CD8-positive, alpha-beta T cell (primary cell): ENCODE measurements at regions of chr9 and their contacts with region 1.

Region 1: DNA sequence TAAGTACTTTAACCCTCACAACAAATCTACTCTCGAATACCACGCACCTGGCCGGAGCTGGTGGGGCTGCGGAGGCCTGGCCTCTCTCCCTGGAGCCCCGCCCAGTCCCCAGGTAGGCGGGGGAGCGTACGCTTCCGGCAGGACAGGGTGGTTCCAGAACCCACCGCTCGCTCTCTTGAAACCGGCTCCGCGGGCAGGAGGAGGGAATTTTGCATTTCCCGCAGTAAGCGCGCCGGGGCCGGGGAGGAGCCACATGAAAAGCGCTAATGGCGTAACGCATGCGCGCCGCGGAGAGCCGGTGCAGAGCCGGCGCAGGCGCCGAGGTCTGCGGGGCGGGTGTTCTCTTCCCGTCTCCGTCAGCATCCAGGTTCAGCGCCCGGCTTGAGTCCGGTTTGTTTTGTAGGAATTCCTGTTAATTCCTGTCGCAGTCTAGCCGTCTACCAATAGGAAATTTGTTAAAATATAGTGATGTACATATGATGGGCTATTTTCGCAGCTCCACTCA is 20.8 kb downstream of the CAVIN4 start:
- DNase-seq: peak; percentile 60 to 90 (median 79)
- ATAC-seq: peak; percentile 86
- H3K4me3 ChIP-seq: peak overlapping the region; percentile 54 to 59
- H3K4me3 Mint-ChIP-seq: peak overlapping the region; percentile 80
- H3K27ac ChIP-seq: peak overlapping the region in 1 of 2 experiments; percentile 49
- H3K27ac Mint-ChIP-seq: peak overlapping the region; percentile 73
- H3K4me1 ChIP-seq: peaks cover 7% of the 10 kb centered on the region
- H3K4me1 Mint-ChIP-seq: peaks cover 24% of the 10 kb centered on the region
- H3K27me3 ChIP-seq: no peaks in the 10 kb centered on the region
- H3K27me3 Mint-ChIP-seq: no peaks in the 10 kb centered on the region
- CTCF ChIP-seq: no peak

Region 2: DNA sequence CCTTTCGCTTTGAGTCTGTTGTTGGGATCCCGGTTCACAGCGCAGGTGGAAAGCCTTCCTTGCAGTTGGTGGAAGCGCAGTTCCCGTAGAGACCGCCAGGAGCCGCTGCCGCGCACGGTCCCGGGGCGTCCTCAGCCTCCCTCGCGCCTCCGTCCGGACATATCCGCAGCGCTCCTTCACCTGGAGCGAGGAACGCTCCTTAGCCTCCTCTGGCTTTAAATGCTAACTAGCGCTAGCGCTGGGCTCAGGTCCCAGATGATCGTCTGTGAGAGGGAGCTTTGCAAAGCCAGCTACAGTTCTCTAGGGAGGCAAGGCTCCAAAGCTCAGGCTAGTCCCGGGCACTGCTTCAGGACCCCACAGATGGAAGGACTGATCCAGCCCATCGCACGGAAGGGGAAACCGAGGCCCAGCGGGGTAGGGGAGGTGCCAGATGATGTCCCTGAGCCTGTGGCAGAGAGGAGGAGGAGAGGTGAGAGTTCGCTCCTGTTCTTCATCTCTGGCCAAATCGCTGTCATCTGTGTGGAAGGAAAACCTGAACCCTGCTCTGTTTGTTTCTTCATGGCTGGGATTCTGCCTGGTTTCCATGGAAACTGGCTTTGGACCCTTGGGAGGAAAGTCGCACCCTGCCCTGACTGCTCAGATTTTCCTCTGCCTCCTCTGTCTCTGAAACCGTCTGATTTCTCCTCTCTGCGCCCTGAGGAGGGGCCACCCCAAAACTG is 1623.5 kb before region 1 on chr9:
- CTCF ChIA-PET with region 1: no interaction called
- POLR2A ChIA-PET with region 1: no interaction called
- intact Hi-C with region 1: loop called in 1 of 2 experiments (anchors 5 kb)
- DNase-seq: peak; percentile 66 to 88 (median 81)
- ATAC-seq: peak; percentile 99
- H3K4me3 ChIP-seq: peak overlapping the region; percentile 33
- H3K4me3 Mint-ChIP-seq: peak overlapping the region; percentile 67
- H3K27ac ChIP-seq: no peak overlapping the region
- H3K27ac Mint-ChIP-seq: no peak overlapping the region
- H3K4me1 ChIP-seq: peaks cover 18% of the 10 kb centered on the region
- H3K4me1 Mint-ChIP-seq: peaks cover 6% of the 10 kb centered on the region
- H3K27me3 ChIP-seq: peaks cover 0 to 7% of the 10 kb centered on the region in 2 experiments
- H3K27me3 Mint-ChIP-seq: peaks cover 7% of the 10 kb centered on the region
- CTCF ChIP-seq: peak; percentile 97

Region 3: DNA sequence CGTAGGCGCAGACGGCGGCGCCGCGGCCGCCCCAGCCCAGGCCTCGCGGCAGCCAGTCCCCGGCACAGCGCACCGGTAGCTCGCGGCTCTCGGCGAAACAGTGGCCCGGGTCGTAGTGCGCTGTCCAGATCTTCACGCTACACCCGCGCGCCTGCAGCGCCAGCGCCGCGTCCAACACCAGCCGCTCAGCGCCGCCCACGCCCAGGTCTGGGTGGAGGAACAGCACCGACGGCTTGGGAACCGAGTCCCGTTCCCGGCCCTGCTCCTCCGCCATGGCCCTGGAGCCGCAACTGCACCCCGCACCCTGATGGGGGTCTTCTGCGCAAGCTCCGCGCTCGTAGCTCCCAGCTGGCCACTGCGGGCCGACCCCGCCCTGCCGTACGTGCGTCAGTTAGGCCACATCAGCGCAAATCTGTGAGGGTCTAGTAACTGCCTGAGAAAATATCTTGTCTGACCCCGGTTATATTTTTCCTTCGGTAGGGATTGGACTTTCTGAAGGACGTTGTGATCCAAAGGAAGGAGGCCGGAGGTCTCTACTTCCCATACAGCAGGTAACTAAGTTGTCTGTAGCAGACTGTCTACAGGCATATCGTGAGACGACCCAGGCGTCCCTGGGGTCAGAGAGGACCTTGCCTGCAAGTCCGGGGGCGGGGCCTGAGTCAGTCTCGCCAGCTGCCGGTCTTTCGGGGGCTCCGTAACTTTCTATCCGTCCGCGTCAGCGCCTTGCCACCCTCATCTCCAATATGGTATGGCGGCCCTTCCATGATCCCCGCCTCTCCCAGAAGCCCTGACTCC is 1376.9 kb before region 1 on chr9 and contains the starts of genes ALG2 and SEC61B:
- CTCF ChIA-PET with region 1: no interaction called
- POLR2A ChIA-PET with region 1: no interaction called
- intact Hi-C with region 1: loop called in 1 of 2 experiments (anchors 5 kb)
- DNase-seq: peak; percentile 87 to 96 (median 94)
- ATAC-seq: peak; percentile 88
- H3K4me3 ChIP-seq: peak within 1 kb of the TSS; percentile 79 to 90
- H3K4me3 Mint-ChIP-seq: peak within 1 kb of the TSS; percentile 99
- H3K27ac ChIP-seq: peak within 1 kb of the TSS; percentile 95 to 99
- H3K27ac Mint-ChIP-seq: peak within 1 kb of the TSS; percentile 100
- H3K4me1 ChIP-seq: peaks cover 30% of the 10 kb centered on the region
- H3K4me1 Mint-ChIP-seq: peaks cover 80% of the 10 kb centered on the region
- H3K27me3 ChIP-seq: no peaks in the 10 kb centered on the region
- H3K27me3 Mint-ChIP-seq: no peaks in the 10 kb centered on the region
- CTCF ChIP-seq: no peak
- total RNA-seq, gene ALG2: 21.0 to 24.7 TPM
- total RNA-seq, gene SEC61B: 107 to 108 TPM

Region 4: GRCh38 chr9:100028201-100028784 is 570.4 kb before region 1 on chr9:
- CTCF ChIA-PET with region 1: no interaction called
- POLR2A ChIA-PET with region 1: no interaction called
- intact Hi-C with region 1: loop called in 1 of 2 experiments (anchors 1 kb)
- DNase-seq: peak; percentile 47 to 75 (median 66)
- ATAC-seq: peak; percentile 97
- H3K4me3 ChIP-seq: no peak overlapping the region
- H3K4me3 Mint-ChIP-seq: no peak overlapping the region
- H3K27ac ChIP-seq: no peak overlapping the region
- H3K27ac Mint-ChIP-seq: no peak overlapping the region
- H3K4me1 ChIP-seq: no peaks in the 10 kb centered on the region
- H3K4me1 Mint-ChIP-seq: peaks cover 3% of the 10 kb centered on the region
- H3K27me3 ChIP-seq: no peaks in the 10 kb centered on the region
- H3K27me3 Mint-ChIP-seq: no peaks in the 10 kb centered on the region
- CTCF ChIP-seq: peak; percentile 73

Region 5: DNA sequence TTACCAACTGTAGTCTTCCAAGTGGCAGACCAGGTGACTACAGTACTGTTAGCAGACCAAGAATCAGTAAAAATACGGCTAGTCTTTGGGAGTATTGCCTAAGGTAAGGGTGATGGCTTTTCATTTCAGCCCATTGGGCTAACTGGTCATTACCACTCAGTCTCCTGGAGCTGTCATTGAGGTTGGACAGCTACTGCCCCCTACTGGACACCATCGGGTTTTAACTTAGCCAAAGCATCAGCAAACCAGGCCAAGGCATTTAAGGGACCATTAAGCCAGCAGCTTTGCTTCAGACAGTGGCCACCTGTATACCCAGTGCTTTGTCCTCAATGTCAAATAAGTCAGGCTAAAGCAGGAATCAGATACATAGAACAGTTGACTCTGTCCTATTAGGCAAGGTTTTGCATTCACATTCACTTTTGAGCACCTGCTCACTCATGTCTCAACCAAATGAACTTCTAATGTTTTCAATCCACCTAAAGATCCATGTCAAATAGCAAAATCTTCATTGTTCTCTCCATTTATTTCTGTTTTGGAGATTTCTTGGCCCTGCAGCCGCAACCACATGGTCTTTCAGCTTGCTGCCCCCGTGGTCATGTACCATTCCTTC is 382.4 kb before region 1 on chr9:
- CTCF ChIA-PET with region 1: no interaction called
- POLR2A ChIA-PET with region 1: no interaction called
- intact Hi-C with region 1: loop called in 1 of 2 experiments (anchors 10 kb)
- DNase-seq: peak; percentile 27 to 75 (median 56)
- ATAC-seq: peak; percentile 51
- H3K4me3 ChIP-seq: no peak overlapping the region
- H3K4me3 Mint-ChIP-seq: no peak overlapping the region
- H3K27ac ChIP-seq: no peak overlapping the region
- H3K27ac Mint-ChIP-seq: no peak overlapping the region
- H3K4me1 ChIP-seq: no peaks in the 10 kb centered on the region
- H3K4me1 Mint-ChIP-seq: no peaks in the 10 kb centered on the region
- H3K27me3 ChIP-seq: no peaks in the 10 kb centered on the region
- H3K27me3 Mint-ChIP-seq: no peaks in the 10 kb centered on the region
- CTCF ChIP-seq: peak; percentile 66

Region 6: GRCh38 chr9:100411472-100412283 is 187.0 kb before region 1 on chr9:
- CTCF ChIA-PET with region 1: no interaction called
- POLR2A ChIA-PET with region 1: no interaction called
- intact Hi-C with region 1: loop called in 1 of 2 experiments (anchors 5 kb)
- DNase-seq: peak; percentile 60 to 94 (median 87)
- ATAC-seq: peak; percentile 100
- H3K4me3 ChIP-seq: peak overlapping the region; percentile 42 to 57
- H3K4me3 Mint-ChIP-seq: peak overlapping the region; percentile 94
- H3K27ac ChIP-seq: peak overlapping the region in 1 of 2 experiments; percentile 25
- H3K27ac Mint-ChIP-seq: peak overlapping the region; percentile 83
- H3K4me1 ChIP-seq: peaks cover 9% of the 10 kb centered on the region
- H3K4me1 Mint-ChIP-seq: peaks cover 13% of the 10 kb centered on the region
- H3K27me3 ChIP-seq: peaks cover 0 to 5% of the 10 kb centered on the region in 2 experiments
- H3K27me3 Mint-ChIP-seq: peaks cover 26% of the 10 kb centered on the region
- CTCF ChIP-seq: no peak

Region 7: DNA sequence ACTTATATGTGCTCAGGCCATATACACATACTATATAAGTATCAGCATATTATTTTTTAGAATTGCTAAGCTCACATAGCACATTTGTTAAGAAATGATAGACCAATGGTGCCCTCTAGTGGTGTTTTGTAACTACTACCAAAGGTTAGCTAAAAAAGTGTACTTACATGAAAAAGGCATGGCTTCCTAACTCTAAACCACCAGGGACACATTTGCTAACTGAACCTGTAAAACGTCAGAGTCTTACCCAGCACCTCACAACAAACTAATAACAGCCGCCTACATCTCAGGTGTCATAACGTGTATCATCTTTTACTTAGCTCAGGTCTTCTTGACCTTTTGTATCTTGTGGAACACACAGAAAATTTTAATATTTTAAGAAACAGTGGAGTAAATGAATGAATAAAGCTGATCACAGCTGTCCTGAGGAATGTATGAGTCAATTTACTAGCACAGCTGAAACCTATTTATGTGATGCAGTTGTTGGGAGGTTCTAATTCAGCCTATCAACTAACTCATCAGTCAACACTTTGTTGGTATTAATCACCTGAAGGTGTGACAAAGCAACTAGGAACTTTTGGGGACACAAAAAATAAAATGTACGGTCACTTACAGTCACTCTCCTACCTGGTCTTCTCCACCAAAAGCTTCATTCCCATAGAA is 713.2 kb after region 1 on chr9:
- CTCF ChIA-PET with region 1: interaction called, 8 read pairs
- POLR2A ChIA-PET with region 1: no interaction called
- intact Hi-C with region 1: loop called in 1 of 2 experiments (anchors 2 kb)
- DNase-seq: peak in 3 of 9 experiments; percentile 11 to 74 (median 65)
- ATAC-seq: peak; percentile 59
- H3K4me3 ChIP-seq: no peak overlapping the region
- H3K4me3 Mint-ChIP-seq: no peak overlapping the region
- H3K27ac ChIP-seq: no peak overlapping the region
- H3K27ac Mint-ChIP-seq: no peak overlapping the region
- H3K4me1 ChIP-seq: no peaks in the 10 kb centered on the region
- H3K4me1 Mint-ChIP-seq: no peaks in the 10 kb centered on the region
- H3K27me3 ChIP-seq: no peaks in the 10 kb centered on the region
- H3K27me3 Mint-ChIP-seq: peaks cover 11% of the 10 kb centered on the region
- CTCF ChIP-seq: peak; percentile 73